CD8-positive, alpha-beta T cell (primary cell): ENCODE measurements at regions of chr22 and their contacts with region 1.

Region 1: GRCh38 chr22:32103658-32104315 is 55.3 kb downstream of the C22orf42 start:
- DNase-seq: peak in 2 of 9 experiments; percentile 27 to 45
- ATAC-seq: no peak
- H3K4me3 ChIP-seq: no peak overlapping the region
- H3K4me3 Mint-ChIP-seq: no peak overlapping the region
- H3K27ac ChIP-seq: no peak overlapping the region
- H3K27ac Mint-ChIP-seq: no peak overlapping the region
- H3K4me1 ChIP-seq: no peaks in the 10 kb centered on the region
- H3K4me1 Mint-ChIP-seq: no peaks in the 10 kb centered on the region
- H3K27me3 ChIP-seq: no peaks in the 10 kb centered on the region
- H3K27me3 Mint-ChIP-seq: peaks cover 39% of the 10 kb centered on the region
- CTCF ChIP-seq: peak; percentile 71

Region 2: DNA sequence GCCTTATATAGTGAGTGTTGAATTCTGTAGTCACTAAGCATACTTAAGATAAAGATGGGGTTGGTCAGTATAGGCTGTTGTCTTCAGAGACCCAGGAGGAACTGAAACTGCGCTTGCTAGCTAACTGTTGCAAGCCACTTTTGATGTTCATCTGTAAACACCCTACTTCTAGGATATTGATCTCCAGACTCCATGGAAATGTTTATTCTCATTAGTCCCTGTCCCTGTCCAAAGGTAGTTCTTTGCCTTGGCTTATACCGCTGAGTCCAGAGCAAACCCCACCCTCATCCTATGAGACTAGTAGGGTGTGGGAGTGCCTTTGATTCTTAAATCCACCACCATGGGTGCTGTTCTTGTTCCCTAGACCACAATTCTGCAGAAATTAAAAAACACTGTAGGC is 313.5 kb before region 1 on chr22:
- CTCF ChIA-PET with region 1: no interaction called
- POLR2A ChIA-PET with region 1: no interaction called
- intact Hi-C with region 1: no loop called
- DNase-seq: no peak
- ATAC-seq: no peak
- H3K4me3 ChIP-seq: no peak overlapping the region
- H3K4me3 Mint-ChIP-seq: no peak overlapping the region
- H3K27ac ChIP-seq: no peak overlapping the region
- H3K27ac Mint-ChIP-seq: no peak overlapping the region
- H3K4me1 ChIP-seq: no peaks in the 10 kb centered on the region
- H3K4me1 Mint-ChIP-seq: no peaks in the 10 kb centered on the region
- H3K27me3 ChIP-seq: no peaks in the 10 kb centered on the region
- H3K27me3 Mint-ChIP-seq: no peaks in the 10 kb centered on the region
- CTCF ChIP-seq: no peak

Region 3: DNA sequence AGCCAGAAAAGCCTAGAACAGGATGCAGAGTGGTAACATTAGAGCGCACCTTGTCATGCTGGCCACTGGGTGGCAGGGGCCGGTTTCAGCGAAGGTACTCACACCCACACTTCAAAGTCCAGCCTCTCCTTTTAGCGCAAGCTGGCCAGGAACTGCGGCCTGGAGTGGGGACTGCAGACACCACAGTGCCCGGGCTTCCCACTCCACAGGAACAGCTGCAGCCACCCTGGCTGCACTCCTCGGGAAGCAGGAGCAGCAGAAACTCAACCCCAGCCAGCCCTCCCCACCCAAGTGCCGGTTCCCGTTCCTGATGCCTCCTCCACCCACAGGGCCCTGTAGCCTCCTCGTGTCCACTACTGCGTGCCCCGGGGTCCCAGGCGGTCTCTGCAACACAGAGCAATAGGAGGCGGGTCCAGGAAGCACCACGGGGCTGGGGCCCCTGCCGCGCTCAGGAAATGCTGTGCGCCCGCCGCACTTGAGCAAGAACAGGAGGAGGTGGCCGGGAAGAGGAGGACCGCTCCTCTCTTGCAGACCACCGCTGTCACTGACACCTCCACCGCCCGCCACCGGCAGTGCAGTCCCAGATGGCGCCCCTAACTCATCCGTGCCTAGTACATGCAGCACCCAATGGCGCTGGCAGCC is 98.9 kb after region 1 on chr22:
- CTCF ChIA-PET with region 1: interaction called, 3 read pairs
- POLR2A ChIA-PET with region 1: no interaction called
- intact Hi-C with region 1: loop called (anchors 1 to 2 kb)
- DNase-seq: peak in 3 of 9 experiments; percentile 29 to 45 (median 33)
- ATAC-seq: peak; percentile 35
- H3K4me3 ChIP-seq: peak overlapping the region; percentile 35 to 50
- H3K4me3 Mint-ChIP-seq: peak overlapping the region; percentile 66
- H3K27ac ChIP-seq: no peak overlapping the region
- H3K27ac Mint-ChIP-seq: no peak overlapping the region
- H3K4me1 ChIP-seq: peaks cover 26% of the 10 kb centered on the region
- H3K4me1 Mint-ChIP-seq: peaks cover 26% of the 10 kb centered on the region
- H3K27me3 ChIP-seq: peaks cover 2 to 5% of the 10 kb centered on the region in 2 experiments
- H3K27me3 Mint-ChIP-seq: peaks cover 19% of the 10 kb centered on the region
- CTCF ChIP-seq: no peak

Region 4: GRCh38 chr22:32474635-32475467 is 371.1 kb after region 1 on chr22 and contains the start of gene FBXO7:
- CTCF ChIA-PET with region 1: interaction called, 3 read pairs
- POLR2A ChIA-PET with region 1: no interaction called
- intact Hi-C with region 1: loop called (anchors 1 to 5 kb)
- DNase-seq: peak; percentile 70 to 95 (median 86)
- ATAC-seq: peak; percentile 86
- H3K4me3 ChIP-seq: peak within 1 kb of the TSS; percentile 83 to 91
- H3K4me3 Mint-ChIP-seq: peak within 1 kb of the TSS; percentile 90
- H3K27ac ChIP-seq: peak within 1 kb of the TSS; percentile 90 to 92
- H3K27ac Mint-ChIP-seq: peak within 1 kb of the TSS; percentile 96
- H3K4me1 ChIP-seq: peaks cover 39% of the 10 kb centered on the region
- H3K4me1 Mint-ChIP-seq: peaks cover 24% of the 10 kb centered on the region
- H3K27me3 ChIP-seq: no peaks in the 10 kb centered on the region
- H3K27me3 Mint-ChIP-seq: no peaks in the 10 kb centered on the region
- CTCF ChIP-seq: peak; percentile 23
- total RNA-seq, gene FBXO7: 172 to 174 TPM

Region 5: GRCh38 chr22:32796865-32797573 is 693.2 kb after region 1 on chr22:
- CTCF ChIA-PET with region 1: no interaction called
- POLR2A ChIA-PET with region 1: no interaction called
- intact Hi-C with region 1: loop called in 1 of 2 experiments (anchors 10 kb)
- DNase-seq: peak; percentile 3 to 67 (median 54)
- ATAC-seq: peak; percentile 61
- H3K4me3 ChIP-seq: no peak overlapping the region
- H3K4me3 Mint-ChIP-seq: no peak overlapping the region
- H3K27ac ChIP-seq: no peak overlapping the region
- H3K27ac Mint-ChIP-seq: no peak overlapping the region
- H3K4me1 ChIP-seq: no peaks in the 10 kb centered on the region
- H3K4me1 Mint-ChIP-seq: peaks cover 5% of the 10 kb centered on the region
- H3K27me3 ChIP-seq: peaks cover 0 to 4% of the 10 kb centered on the region in 2 experiments
- H3K27me3 Mint-ChIP-seq: peaks cover 27% of the 10 kb centered on the region
- CTCF ChIP-seq: peak; percentile 69

Region 6: GRCh38 chr22:33049119-33049729 is 945.4 kb after region 1 on chr22:
- CTCF ChIA-PET with region 1: no interaction called
- POLR2A ChIA-PET with region 1: no interaction called
- intact Hi-C with region 1: loop called (anchors 5 to 10 kb)
- DNase-seq: peak in 8 of 9 experiments; percentile 18 to 66 (median 53)
- ATAC-seq: no peak
- H3K4me3 ChIP-seq: no peak overlapping the region
- H3K4me3 Mint-ChIP-seq: no peak overlapping the region
- H3K27ac ChIP-seq: no peak overlapping the region
- H3K27ac Mint-ChIP-seq: no peak overlapping the region
- H3K4me1 ChIP-seq: no peaks in the 10 kb centered on the region
- H3K4me1 Mint-ChIP-seq: no peaks in the 10 kb centered on the region
- H3K27me3 ChIP-seq: peaks cover 0 to 4% of the 10 kb centered on the region in 2 experiments
- H3K27me3 Mint-ChIP-seq: peaks cover 29% of the 10 kb centered on the region
- CTCF ChIP-seq: peak; percentile 71